Tibial artery (tissue), 4 donors: ENCODE measurements at regions of chr17 and their contacts with region 1.

Region 1: GRCh38 chr17:77734341-77735080 is 224.0 kb upstream of the TNRC6C start:
- DNase-seq: peak; percentile 94 to 98
- H3K4me3 ChIP-seq: peak overlapping the region; percentile 26 to 41
- H3K27ac ChIP-seq: peak overlapping the region; percentile 80 to 88
- H3K4me1 ChIP-seq: peaks cover 9 to 63% (median 47%) of the 10 kb centered on the region in 4 donors
- H3K27me3 ChIP-seq: no peaks in the 10 kb centered on the region
- CTCF ChIP-seq: no peak

Region 2: DNA sequence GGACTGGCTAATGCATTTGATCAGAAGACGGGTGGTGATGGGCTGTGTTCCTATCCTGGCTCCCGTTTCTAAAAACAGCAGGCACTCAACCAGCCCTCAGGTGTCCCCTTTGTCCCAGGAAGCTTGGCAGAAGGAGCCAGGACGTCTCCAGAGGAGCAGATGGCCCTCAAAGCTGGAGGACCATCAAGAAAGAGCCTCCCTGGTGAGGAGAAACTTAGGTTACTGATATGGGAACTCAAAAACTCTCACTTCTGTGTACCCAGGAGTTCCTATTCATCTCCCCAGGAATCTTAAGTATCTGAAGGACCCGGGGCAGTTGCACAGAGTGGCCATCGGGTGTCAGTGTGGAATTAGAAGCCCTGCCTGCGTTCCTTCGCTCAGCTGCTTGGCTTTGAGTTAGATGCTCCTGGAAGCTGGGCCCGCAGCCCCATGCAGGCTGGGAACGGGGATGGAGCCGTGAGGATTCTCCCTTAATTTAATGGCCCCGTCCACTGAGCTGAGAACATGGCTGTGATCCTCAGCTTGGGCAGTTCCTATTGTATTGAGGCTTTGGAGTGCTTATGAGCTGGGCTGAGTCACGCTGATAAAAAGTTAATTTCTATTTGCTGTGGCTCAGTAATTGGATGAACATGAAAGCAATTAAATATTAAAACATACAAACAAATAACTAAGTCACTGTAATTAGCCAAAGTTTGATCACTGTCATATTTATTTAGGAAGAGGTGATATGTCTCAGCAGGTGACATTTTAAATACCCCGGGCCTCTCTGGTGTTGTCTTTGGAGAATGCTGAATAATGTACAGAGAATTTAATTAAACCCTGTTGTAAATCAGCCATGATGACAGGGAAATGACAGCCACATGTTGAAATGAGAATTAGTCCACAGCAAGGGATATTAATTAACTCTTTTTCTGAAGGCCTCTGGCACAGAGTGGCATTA is 191.7 kb before region 1 on chr17:
- intact Hi-C with region 1: loop called (anchors 5 kb)
- DNase-seq: peak; percentile 89 to 90
- H3K4me3 ChIP-seq: no peak overlapping the region
- H3K27ac ChIP-seq: peak overlapping the region in 1 of 2 donors; percentile 46
- H3K4me1 ChIP-seq: peaks cover 0 to 18% (median 8%) of the 10 kb centered on the region in 4 donors
- H3K27me3 ChIP-seq: peaks cover 0 to 10% of the 10 kb centered on the region in 2 donors
- CTCF ChIP-seq: peak; percentile 95 to 97

Region 3: DNA sequence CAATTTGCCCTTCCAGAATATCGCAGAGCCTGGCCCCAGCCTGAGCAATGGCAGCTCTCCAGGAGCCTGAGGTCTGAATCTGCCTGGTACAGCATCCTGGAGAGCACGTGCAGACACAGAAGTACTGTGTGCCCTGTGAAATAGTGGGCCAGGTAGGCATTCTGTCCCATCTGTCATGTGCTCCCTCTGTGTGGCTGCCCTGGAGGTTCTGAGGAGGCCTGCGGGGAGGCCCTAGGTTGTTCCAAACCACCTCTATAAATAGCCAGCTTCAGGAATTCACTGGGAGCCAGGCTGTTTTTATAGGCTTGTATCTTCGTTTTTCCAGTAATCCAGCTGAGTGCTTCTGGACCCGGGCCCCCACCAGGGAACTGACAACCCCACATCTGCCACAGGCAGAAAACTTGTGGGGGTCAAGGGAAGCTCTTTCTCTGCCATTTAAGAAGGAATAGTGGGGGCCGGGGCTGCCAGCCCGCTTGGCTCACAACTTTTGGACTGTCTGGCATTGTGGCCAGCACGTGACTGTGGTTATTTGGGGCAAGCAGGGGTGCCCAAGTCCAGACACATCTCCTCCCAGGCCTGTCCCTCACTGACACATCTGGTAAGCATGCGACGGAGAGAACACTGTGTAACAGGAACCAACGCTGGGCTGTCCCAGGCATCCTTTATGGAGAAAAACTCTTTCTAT is 132.3 kb before region 1 on chr17:
- intact Hi-C with region 1: loop called (anchors 2 kb)
- DNase-seq: peak; percentile 89 to 96
- H3K4me3 ChIP-seq: peak overlapping the region; percentile 20 to 40
- H3K27ac ChIP-seq: peak overlapping the region; percentile 91 to 96
- H3K4me1 ChIP-seq: peaks cover 4 to 78% (median 61%) of the 10 kb centered on the region in 4 donors
- H3K27me3 ChIP-seq: no peaks in the 10 kb centered on the region
- CTCF ChIP-seq: peak in 1 of 2 experiments; percentile 15

Region 4: DNA sequence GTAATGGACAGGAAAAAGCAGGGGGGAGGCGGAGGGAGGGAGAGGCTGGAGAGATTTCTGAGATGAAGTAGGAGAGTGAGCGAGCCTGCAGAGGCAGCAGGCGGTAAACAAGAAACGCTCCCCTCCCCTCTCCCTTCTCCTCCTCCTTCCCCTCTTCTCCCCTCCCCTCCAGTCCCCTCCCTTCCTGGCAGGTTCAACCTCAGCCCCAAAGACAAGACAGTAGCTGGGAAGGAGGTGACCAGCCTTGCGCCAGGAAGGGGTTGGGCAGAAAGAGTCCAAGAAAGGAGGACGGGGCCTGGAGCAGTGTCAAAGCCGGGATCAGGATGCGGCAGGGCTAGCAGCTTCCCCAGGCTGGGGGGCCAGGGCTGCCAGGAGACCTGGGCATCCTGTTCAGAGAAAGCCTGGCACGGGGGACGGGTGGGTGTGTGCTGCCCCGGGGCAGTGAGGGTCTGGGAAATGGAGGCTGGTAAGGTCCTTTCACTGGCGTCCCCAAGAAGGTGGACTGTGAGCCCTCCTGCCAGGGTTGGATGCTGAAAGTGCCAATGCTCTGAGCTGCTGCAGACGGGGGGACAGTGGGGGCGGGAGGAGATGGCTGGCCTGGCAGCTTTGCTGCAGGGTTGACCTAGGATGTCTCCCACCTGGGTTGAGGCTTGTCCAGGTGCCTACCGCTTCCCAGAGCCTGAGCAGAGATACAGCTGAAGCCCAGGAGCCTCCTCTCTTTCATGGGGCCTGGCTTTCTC is 37.6 kb before region 1 on chr17:
- intact Hi-C with region 1: no loop called
- DNase-seq: peak in 1 of 2 donors; percentile 53
- H3K4me3 ChIP-seq: no peak overlapping the region
- H3K27ac ChIP-seq: no peak overlapping the region
- H3K4me1 ChIP-seq: peaks cover 0 to 4% (median 2%) of the 10 kb centered on the region in 4 donors
- H3K27me3 ChIP-seq: peaks cover 0 to 5% of the 10 kb centered on the region in 2 donors
- CTCF ChIP-seq: no peak

Region 5: DNA sequence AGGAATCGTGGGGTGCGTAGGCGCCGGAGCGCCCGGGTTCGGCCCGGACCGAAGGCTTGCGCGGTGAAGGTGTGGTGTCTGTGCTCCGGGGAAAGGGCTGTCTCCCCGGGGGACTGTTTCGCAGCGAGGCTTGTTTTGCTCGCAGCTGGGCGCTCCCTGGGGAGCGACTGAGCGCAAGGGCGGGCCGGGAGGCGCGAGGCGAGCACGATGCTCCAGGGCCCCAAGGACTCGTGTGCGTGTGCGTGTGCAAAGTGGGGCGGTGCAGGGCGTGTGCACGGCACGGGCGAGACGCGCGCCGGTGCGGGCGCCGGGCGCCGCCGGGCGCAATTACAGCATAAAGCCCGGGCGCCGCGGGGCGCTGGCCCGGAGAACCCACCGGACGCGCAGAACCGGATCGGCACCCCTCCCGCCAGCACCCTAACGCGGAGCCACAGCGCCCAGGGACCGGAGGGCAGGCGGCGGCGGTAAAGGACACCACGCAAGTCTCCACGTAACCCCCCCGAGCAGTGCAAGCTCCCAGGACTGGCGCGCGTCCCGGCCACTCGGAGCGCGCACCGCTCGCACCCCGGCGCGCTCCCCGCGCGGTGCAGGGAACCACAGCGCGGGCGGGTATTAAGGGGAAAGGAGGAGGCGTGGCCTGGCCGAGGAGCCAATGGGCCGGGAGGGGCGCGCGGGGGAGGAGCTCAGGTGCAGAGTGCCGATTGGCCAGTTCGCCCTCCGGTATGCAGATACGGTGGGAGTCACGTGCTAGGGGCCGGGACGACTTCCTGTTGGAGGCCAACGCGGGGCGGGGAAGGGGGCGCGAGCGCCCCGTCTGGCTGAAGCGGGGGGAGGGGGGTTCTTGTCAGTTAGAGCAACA is 223.6 kb after region 1 on chr17 and contains the start of gene TNRC6C:
- intact Hi-C with region 1: loop called (anchors 5 kb)
- DNase-seq: peak; percentile 100
- H3K4me3 ChIP-seq: peak within 1 kb of the TSS; percentile 66 to 71
- H3K27ac ChIP-seq: peak within 1 kb of the TSS; percentile 85 to 89
- H3K4me1 ChIP-seq: peaks cover 0 to 38% (median 15%) of the 10 kb centered on the region in 4 donors
- H3K27me3 ChIP-seq: no peaks in the 10 kb centered on the region
- CTCF ChIP-seq: peak in 1 of 2 experiments; percentile 31